ENCODE measurements at regions of chr2 and their contacts with region 1.

Region 1: GRCh38 chr2:128027801-128028667 is at the start of gene SAP130:
- DNase-seq: peak; percentile 98
- H3K4me3 Mint-ChIP-seq: peak within 1 kb of the TSS; percentile 97
- H3K27ac Mint-ChIP-seq: peak within 1 kb of the TSS; percentile 72
- H3K4me1 Mint-ChIP-seq: peaks cover 11% of the 10 kb centered on the region
- H3K27me3 Mint-ChIP-seq: no peaks in the 10 kb centered on the region
- total RNA-seq, gene SAP130: 20.4 to 20.5 TPM

Region 2: GRCh38 chr2:126657636-126658318 is 1370.3 kb before region 1 on chr2:
- CTCF ChIA-PET with region 1: no interaction called
- intact Hi-C with region 1: loop called (anchors 5 kb)
- DNase-seq: peak; percentile 87
- H3K4me3 Mint-ChIP-seq: peak overlapping the region; percentile 100
- H3K27ac Mint-ChIP-seq: peak overlapping the region; percentile 100
- H3K4me1 Mint-ChIP-seq: peaks cover 61% of the 10 kb centered on the region
- H3K27me3 Mint-ChIP-seq: no peaks in the 10 kb centered on the region

Region 3: DNA sequence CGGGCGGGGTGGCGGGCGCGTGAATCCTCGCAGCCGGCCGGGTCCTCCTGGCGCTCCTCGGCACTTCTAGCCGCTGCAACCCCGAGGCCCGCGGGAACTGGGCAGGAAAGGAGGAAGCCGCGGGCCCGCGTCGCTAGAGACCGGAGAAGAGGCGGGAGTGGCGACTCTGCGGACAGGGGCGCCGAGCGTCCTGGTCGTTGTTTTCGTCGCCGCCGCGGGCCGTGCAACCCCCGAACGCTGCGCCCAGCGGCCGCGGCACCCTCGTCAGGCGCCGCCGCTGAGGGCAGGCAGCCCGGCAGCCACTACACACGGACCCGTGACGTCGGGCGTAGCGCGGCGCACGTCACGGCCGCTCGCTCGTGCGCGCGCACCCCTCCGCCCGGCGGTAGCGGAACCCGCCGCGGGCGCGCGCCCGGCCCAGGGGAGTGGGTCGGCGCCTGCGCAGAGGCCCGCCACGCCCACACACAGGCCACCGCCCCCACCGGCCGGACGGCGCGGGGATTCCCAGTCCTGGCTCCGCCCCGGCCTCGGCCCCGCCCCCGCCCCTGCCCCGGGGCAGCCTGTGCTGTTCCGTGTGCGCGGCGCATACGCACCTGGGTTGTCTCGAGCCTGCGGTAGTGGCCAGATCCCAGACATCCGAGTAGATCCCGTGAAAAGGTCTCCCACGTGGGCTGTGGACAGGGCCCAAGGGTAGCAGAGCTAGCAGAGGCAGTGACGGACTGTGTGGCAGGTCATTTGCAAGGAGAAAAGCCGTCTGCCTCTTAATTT is 640.2 kb before region 1 on chr2 and contains the start of gene MAP3K2:
- CTCF ChIA-PET with region 1: no interaction called
- intact Hi-C with region 1: loop called (anchors 5 kb)
- DNase-seq: peak; percentile 92
- H3K4me3 Mint-ChIP-seq: peak within 1 kb of the TSS; percentile 85
- H3K27ac Mint-ChIP-seq: peak within 1 kb of the TSS; percentile 92
- H3K4me1 Mint-ChIP-seq: peaks cover 69% of the 10 kb centered on the region
- H3K27me3 Mint-ChIP-seq: no peaks in the 10 kb centered on the region
- total RNA-seq, gene MAP3K2: 27.1 to 27.4 TPM

Region 4: DNA sequence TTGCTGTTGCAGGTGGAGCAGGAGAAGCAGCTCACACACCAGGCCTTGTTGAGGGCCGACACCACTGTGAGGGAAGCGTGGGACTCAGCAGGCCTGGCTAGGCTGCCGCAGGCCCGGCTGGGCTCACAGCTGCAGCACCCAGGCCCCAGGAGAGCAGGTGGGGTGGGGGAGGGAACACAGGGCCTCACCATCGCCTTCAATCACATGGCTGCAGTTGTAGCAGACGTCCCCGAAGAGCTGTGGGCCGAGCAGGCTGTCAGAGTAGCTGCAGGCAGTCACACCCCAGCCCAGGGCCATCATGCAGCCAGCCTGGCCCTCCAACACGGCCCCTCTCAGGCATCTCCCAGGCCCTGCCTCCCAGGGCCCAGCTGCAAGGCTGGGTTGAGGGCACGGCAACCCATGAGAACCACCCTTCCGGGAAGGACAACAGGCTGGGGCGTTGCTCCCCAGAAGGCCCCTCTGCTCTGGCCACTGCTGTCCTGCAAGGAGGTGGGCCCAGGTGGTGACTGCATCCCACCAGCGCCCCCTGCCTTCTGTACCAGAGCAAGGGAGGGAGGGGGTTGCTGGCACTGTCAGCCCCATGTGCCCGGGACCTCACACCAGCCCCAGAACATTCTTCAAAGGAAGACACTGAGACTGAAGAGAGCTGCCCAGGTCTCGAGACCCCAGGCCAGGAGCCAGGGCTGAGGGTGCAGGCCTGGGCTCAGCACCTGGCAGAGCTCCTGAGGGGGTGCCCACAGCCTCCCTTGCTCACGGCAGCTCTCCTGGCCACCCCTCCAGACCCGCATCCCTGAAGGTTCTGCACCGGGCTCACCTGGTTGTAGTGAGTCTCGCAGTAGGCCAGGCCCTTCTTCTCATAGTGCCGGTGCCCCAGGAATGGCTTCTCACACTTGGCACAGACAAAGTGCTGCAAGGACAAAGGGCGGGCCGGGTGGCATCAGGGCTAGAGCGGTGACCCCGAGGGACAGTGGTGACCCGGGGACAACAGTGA is 387.7 kb before region 1 on chr2:
- CTCF ChIA-PET with region 1: no interaction called
- intact Hi-C with region 1: loop called (anchors 5 kb)
- DNase-seq: peak; percentile 65
- H3K4me3 Mint-ChIP-seq: peak overlapping the region; percentile 65
- H3K27ac Mint-ChIP-seq: peak overlapping the region; percentile 71
- H3K4me1 Mint-ChIP-seq: peaks cover 54% of the 10 kb centered on the region
- H3K27me3 Mint-ChIP-seq: no peaks in the 10 kb centered on the region

Region 5: GRCh38 chr2:127810619-127811396 is 217.2 kb before region 1 on chr2 and contains the start of gene WDR33:
- CTCF ChIA-PET with region 1: no interaction called
- intact Hi-C with region 1: loop called (anchors 1 kb)
- DNase-seq: peak; percentile 97
- H3K4me3 Mint-ChIP-seq: peak within 1 kb of the TSS; percentile 94
- H3K27ac Mint-ChIP-seq: peak within 1 kb of the TSS; percentile 97
- H3K4me1 Mint-ChIP-seq: peaks cover 41% of the 10 kb centered on the region
- H3K27me3 Mint-ChIP-seq: no peaks in the 10 kb centered on the region
- total RNA-seq, gene WDR33: 61.1 to 63.2 TPM

Region 6: DNA sequence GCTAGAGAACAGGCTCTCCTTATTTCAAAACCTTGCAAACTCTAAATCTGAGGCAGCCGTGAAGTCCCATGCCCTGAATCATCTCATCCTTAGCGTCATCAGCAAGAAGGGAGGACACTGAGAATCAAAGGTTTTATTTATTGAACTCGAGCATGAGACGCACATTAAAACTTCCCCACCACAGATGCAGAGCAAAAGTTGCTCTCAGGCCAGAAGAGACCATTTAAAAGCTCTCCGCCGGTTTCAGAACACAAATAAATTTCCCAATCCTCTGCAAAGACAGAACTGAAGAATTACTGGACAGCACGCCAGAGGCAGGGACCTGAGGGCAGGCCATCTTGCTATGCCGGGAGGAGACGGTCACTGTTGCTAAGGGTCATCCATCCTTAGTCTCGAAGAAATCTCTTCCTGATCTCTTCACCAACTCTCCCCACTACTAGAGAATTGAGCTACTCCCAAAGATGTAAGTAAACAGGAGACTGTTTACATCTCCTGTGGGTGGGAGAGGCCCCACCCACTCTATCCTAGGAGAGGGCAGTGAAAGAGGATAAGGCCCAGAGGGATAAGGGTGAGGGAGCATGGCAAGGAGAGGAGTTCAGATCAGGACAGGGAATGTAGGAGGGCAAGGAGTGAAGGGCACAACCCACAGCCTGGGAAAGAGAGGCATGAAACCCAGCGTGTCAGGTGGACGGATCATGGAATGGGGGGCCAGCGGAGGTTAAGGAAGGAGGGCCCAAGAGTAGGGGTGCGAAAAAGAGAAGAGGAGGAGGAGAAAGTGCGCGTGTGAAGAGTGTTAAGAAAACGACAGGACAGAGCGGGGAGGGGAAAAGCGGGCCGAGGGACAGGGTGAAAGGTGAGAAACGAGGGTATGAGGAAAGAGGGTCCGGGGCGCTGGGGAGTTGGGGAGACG is 143.3 kb before region 1 on chr2:
- CTCF ChIA-PET with region 1: no interaction called
- intact Hi-C with region 1: loop called (anchors 1 kb)
- DNase-seq: no peak
- H3K4me3 Mint-ChIP-seq: peak overlapping the region; percentile 86
- H3K27ac Mint-ChIP-seq: peak overlapping the region; percentile 71
- H3K4me1 Mint-ChIP-seq: peaks cover 60% of the 10 kb centered on the region
- H3K27me3 Mint-ChIP-seq: no peaks in the 10 kb centered on the region

Region 7: GRCh38 chr2:128054104-128054503 is 26.1 kb after region 1 on chr2:
- CTCF ChIA-PET with region 1: no interaction called
- intact Hi-C with region 1: no loop called
- DNase-seq: no peak
- H3K4me3 Mint-ChIP-seq: no peak overlapping the region
- H3K27ac Mint-ChIP-seq: no peak overlapping the region
- H3K4me1 Mint-ChIP-seq: no peaks in the 10 kb centered on the region
- H3K27me3 Mint-ChIP-seq: peaks cover 33% of the 10 kb centered on the region

Region 8: GRCh38 chr2:128232965-128233789 is 205.1 kb after region 1 on chr2:
- CTCF ChIA-PET with region 1: no interaction called
- intact Hi-C with region 1: loop called (anchors 2 kb)
- DNase-seq: peak; percentile 91
- H3K4me3 Mint-ChIP-seq: peak overlapping the region; percentile 71
- H3K27ac Mint-ChIP-seq: no peak overlapping the region
- H3K4me1 Mint-ChIP-seq: peaks cover 4% of the 10 kb centered on the region
- H3K27me3 Mint-ChIP-seq: no peaks in the 10 kb centered on the region

Region 9: DNA sequence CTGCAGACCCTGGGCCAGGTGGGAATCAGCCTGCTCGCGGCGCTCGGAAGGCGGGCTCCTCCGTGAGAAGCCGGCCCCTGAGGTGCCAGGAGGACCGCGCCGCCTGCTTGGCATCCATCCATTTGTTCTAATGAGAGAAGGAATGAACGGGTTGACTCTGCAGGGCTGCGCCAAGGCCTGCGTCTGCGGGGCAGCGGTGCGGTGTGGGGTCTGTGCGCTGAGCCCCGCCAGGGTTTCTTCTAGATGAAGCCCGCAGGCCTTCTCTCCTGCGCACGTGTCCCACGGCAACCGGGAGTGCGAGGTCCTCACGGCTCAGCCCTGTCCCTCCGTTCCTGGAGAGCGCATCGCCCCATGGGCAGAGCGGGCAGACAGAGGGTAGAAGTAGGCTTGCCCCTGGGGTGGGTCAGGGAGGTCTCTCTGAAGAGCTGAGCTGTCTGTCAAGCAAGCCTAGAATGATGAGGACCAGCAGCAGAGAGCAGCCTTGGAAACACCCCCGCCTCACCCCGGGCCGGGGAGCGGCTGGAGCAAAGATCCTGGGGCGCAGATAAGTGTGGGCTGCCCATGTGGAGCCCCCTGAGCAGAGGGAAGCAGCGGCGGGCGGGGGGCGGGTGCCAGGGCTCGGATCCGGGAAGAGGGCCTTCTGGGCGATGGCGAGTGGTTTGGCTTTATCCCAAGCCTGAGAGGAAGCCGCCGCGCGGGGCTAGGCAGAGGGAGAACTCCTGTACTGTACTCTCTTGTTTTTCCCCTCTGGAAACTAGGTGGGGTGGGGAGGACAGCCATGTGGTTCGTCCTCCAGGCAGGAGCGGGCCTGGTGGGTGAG is 318.5 kb after region 1 on chr2:
- CTCF ChIA-PET with region 1: no interaction called
- intact Hi-C with region 1: no loop called
- DNase-seq: no peak
- H3K4me3 Mint-ChIP-seq: no peak overlapping the region
- H3K27ac Mint-ChIP-seq: no peak overlapping the region
- H3K4me1 Mint-ChIP-seq: no peaks in the 10 kb centered on the region
- H3K27me3 Mint-ChIP-seq: peaks cover 5% of the 10 kb centered on the region

Region 10: DNA sequence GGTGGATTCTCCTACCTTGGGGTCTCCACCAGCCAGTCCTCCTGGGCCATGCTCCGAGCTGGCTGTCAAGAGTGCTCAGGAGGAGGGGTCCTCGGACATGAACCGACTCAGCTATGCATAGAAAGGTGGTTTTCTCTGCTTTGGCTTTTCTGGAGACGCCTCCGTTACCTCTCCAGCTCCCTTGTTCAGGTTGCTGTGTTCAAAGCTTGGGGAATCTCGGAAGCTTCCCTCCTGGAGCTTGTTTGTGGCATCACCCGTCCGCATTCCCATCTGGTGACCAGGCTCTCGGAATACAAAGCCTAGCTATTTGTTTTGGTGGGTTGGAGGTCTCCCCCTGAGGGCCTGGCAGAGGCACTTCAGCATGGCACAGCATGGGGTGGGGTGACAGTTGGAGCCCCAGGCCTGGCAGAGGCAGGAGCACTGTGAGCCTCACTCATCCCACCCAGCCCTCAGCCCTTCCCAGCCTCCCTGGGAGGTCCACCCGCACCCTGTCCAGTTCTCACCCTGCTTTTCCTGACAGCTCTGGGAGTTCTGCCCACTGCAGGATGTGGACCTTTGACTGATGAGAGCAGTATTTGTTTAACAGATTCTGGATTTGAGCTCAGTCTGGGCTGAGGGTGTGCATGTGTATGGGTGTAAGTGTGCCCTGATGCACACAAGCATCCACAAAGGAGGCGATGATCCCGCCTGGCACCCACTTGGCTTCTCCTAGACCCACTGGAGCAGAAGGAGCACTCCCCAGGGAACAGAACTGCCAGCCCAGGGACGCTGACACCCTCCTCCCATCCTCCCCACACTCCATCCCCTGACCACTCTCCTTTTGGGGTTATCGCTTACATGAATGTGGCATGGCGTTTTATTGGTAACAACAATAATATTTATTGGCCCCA is 397.9 kb after region 1 on chr2:
- CTCF ChIA-PET with region 1: no interaction called
- intact Hi-C with region 1: no loop called
- DNase-seq: no peak
- H3K4me3 Mint-ChIP-seq: no peak overlapping the region
- H3K27ac Mint-ChIP-seq: no peak overlapping the region
- H3K4me1 Mint-ChIP-seq: no peaks in the 10 kb centered on the region
- H3K27me3 Mint-ChIP-seq: peaks cover 3% of the 10 kb centered on the region

Measured in activated naive CD4-positive, alpha-beta T cell treated with anti-CD3 and anti-CD28 coated beads for 36 hours (primary cell).